Naive thymus-derived CD4-positive, alpha-beta T cell (primary cell): ENCODE measurements at regions of chr5 and their contacts with region 1.

Region 1: DNA sequence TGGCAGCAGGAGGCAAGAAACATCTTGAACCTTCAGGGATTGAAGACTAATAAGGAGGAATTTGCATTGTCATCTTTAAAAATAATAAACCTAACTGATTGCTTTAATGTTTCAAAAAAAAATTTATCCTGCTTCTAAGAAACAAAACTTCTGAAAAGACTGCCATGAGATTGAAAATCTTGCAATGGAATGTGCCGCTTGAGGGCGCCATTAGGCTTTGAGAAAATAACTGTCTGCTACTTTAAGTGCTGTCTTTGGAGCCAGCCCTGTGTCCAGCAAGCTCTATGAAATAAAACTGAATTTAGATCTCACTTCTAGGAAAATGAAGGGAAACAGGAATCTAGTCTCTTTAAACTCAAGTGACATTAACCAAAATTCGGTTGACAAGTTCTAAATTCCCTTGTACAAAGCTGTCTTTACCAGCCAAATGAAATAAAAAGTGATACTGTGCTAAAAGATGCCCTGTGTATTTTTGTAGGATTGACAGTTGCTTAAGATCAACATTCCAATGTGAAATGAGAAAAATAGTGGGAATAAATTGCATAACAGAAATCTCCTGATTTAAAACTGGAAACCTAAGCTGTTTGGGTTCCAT is 79.4 kb downstream of the ESM1 start:
- DNase-seq: peak; percentile 26 to 65 (median 53)
- ATAC-seq: peak; percentile 55
- H3K4me3 ChIP-seq: no peak overlapping the region
- H3K4me3 Mint-ChIP-seq: no peak overlapping the region
- H3K27ac ChIP-seq: no peak overlapping the region
- H3K27ac Mint-ChIP-seq: no peak overlapping the region
- H3K4me1 ChIP-seq: peaks cover 0 to 10% of the 10 kb centered on the region in 2 donors
- H3K4me1 Mint-ChIP-seq: peaks cover 6 to 64% (median 10%) of the 10 kb centered on the region in 7 donors
- H3K27me3 ChIP-seq: no peaks in the 10 kb centered on the region
- H3K27me3 Mint-ChIP-seq: peaks cover 0 to 51% (median 6%) of the 10 kb centered on the region in 5 donors

Region 2: DNA sequence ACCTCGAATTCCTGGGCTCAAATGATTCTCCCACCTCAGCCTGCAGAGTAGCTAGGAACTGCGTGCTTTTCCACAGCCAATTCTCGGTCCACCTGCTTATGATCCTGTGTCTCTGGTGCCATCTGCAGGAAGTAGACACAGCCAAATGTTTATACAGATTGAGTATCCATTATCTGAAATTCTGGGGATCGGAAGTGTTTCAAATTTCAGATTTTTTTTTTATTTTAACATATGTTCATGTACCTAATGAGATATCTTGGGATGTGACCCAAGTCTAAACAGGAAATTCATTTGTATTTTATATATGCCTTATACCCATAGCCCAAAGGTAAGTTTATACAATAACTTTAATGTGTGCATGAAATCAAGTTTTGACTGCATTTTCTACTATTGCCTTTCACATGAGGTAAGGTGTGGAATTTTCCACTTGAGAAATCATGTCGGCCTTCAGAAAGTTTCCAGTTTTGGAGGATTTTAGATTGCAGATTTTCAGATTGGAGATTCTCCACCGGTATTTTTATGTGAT is 10.2 kb before region 1 on chr5:
- CTCF ChIA-PET with region 1: interaction called, 10 read pairs
- POLR2A ChIA-PET with region 1: no interaction called
- intact Hi-C with region 1: no loop called
- DNase-seq: no peak
- ATAC-seq: peak; percentile 57
- H3K4me3 ChIP-seq: no peak overlapping the region
- H3K4me3 Mint-ChIP-seq: peak overlapping the region in 8 of 10 donors; percentile 20 to 77 (median 66)
- H3K27ac ChIP-seq: no peak overlapping the region
- H3K27ac Mint-ChIP-seq: peak overlapping the region in 4 of 9 donors; percentile 2 to 52 (median 38)
- H3K4me1 ChIP-seq: no peaks in the 10 kb centered on the region
- H3K4me1 Mint-ChIP-seq: peaks cover 1 to 6% (median 5%) of the 10 kb centered on the region in 7 donors
- H3K27me3 ChIP-seq: no peaks in the 10 kb centered on the region
- H3K27me3 Mint-ChIP-seq: peaks cover 17 to 81% (median 27%) of the 10 kb centered on the region in 5 donors

Region 3: GRCh38 chr5:55062039-55062779 is 156.2 kb after region 1 on chr5:
- CTCF ChIA-PET with region 1: no interaction called
- POLR2A ChIA-PET with region 1: no interaction called
- intact Hi-C with region 1: loop called in 1 of 2 experiments (anchors 2 kb)
- DNase-seq: peak in 7 of 9 donors; percentile 25 to 71 (median 46)
- ATAC-seq: peak; percentile 81
- H3K4me3 ChIP-seq: peak overlapping the region; percentile 33
- H3K4me3 Mint-ChIP-seq: peak overlapping the region; percentile 43 to 94 (median 82)
- H3K27ac ChIP-seq: no peak overlapping the region
- H3K27ac Mint-ChIP-seq: peak overlapping the region; percentile 17 to 98 (median 62)
- H3K4me1 ChIP-seq: peaks cover 26 to 30% of the 10 kb centered on the region in 2 donors
- H3K4me1 Mint-ChIP-seq: peaks cover 28 to 80% (median 67%) of the 10 kb centered on the region in 7 donors
- H3K27me3 ChIP-seq: no peaks in the 10 kb centered on the region
- H3K27me3 Mint-ChIP-seq: peaks cover 0 to 7% (median 0%) of the 10 kb centered on the region in 5 donors

Region 4: DNA sequence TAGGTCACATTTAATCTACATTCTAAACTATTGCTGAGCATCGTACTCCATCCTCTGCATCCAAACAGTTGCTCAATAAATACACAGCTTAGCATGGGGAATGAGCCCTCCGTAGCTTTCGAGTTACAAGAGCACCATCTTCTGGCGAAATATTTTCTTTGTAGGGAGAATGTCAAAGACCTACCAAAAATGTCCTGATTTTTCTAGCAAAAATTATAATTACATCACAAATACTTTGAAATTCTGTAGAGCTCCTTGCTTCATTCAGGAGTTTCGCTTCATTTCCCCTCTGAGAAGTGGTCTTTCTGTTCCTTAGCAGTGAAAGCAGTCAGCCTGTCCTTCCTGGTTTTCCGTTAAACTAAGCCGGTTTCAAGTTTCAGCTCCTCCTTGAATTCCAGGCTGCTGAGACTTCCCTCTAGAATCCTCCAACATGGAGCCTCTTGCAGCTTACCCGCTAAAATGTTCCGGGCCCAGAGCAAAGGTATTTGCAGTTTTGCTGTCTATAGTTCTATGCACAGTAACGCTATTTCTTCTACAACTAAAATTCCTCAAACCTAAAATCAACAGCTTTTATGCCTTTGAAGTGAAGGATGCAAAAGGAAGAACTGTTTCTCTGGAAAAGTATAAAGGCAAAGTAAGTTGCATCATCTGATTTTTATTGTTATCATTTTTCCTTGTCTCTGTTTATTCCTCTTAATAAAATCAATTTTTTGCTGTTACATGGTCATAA is 253.9 kb after region 1 on chr5 and contains the start of gene GPX8:
- CTCF ChIA-PET with region 1: interaction called, 74 read pairs
- POLR2A ChIA-PET with region 1: interaction called, 5 read pairs
- intact Hi-C with region 1: loop called (anchors 1 kb)
- DNase-seq: peak in 7 of 9 donors; percentile 27 to 65 (median 54)
- ATAC-seq: peak; percentile 75
- H3K4me3 ChIP-seq: no peak within 1 kb of the TSS
- H3K4me3 Mint-ChIP-seq: no peak within 1 kb of the TSS
- H3K27ac ChIP-seq: no peak within 1 kb of the TSS
- H3K27ac Mint-ChIP-seq: no peak within 1 kb of the TSS
- H3K4me1 ChIP-seq: no peaks in the 10 kb centered on the region
- H3K4me1 Mint-ChIP-seq: peaks cover 0 to 9% (median 0%) of the 10 kb centered on the region in 7 donors
- H3K27me3 ChIP-seq: no peaks in the 10 kb centered on the region
- H3K27me3 Mint-ChIP-seq: peaks cover 6 to 75% (median 29%) of the 10 kb centered on the region in 5 donors
- total RNA-seq, gene GPX8: not detected